Natural killer cell (primary cell): ENCODE measurements at regions of chr15 and their contacts with region 1.

Region 1: GRCh38 chr15:65773386-65774111 is 18.5 kb downstream of the DENND4A start:
- DNase-seq: no peak
- ATAC-seq: peak; percentile 13 to 35 (median 31)
- H3K4me3 ChIP-seq: no peak overlapping the region
- H3K4me3 Mint-ChIP-seq: peak overlapping the region; percentile 61
- H3K27ac ChIP-seq: peak overlapping the region; percentile 55
- H3K27ac Mint-ChIP-seq: peak overlapping the region; percentile 44 to 56
- H3K4me1 ChIP-seq: peaks cover 30% of the 10 kb centered on the region
- H3K4me1 Mint-ChIP-seq: peaks cover 45 to 55% of the 10 kb centered on the region in 2 donors
- H3K27me3 ChIP-seq: no peaks in the 10 kb centered on the region
- H3K27me3 Mint-ChIP-seq: no peaks in the 10 kb centered on the region
- CTCF ChIP-seq: no peak

Region 2: DNA sequence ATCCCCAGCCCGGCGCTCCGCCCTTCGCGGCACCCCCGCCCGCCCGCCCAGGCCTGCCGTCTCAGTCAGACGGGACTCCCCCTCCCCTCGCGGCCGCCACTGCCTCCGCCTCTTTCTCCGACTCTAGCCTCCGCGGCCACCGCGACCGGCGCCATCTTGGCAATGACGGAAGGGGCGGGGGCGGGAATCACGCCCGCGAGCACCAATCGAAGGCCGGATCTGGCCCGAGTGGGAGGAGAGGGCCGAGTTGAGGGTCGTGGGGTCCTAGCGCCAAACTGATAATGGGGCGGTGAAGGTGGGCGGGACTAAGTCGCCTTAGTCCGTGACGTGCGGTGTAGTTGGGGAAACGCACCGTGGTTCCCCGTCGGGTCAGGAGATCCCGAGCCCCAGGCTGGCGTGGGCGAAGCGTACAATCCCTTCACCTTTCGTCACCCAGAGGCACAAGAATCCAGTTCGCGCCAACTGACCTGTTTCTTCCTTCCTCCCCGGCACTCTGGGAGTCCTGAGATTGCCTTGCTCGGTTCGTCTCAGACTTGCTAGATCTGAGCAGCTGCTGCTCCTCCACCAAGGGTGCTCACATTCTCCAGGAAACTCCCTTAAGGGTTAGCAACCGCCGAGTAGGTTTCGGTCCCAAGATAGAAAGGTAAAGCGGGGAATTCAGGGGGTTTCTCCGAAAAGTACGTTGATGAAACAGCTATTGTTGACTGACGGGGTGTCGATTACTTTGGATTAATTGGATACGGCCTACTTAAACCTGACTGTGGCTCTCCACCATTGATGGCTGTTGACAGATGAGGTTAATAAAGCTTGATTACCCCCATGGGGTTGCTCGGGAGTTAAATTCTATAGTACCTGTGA is 18.8 kb after region 1 on chr15 and contains the start of gene DENND4A:
- intact Hi-C with region 1: no loop called
- DNase-seq: peak; percentile 98 to 99
- ATAC-seq: peak; percentile 80 to 95 (median 83)
- H3K4me3 ChIP-seq: peak within 1 kb of the TSS; percentile 97
- H3K4me3 Mint-ChIP-seq: peak within 1 kb of the TSS; percentile 96
- H3K27ac ChIP-seq: peak within 1 kb of the TSS; percentile 96
- H3K27ac Mint-ChIP-seq: peak within 1 kb of the TSS; percentile 98 to 100
- H3K4me1 ChIP-seq: peaks cover 16% of the 10 kb centered on the region
- H3K4me1 Mint-ChIP-seq: peaks cover 38 to 39% of the 10 kb centered on the region in 2 donors
- H3K27me3 ChIP-seq: no peaks in the 10 kb centered on the region
- H3K27me3 Mint-ChIP-seq: no peaks in the 10 kb centered on the region
- CTCF ChIP-seq: no peak
- total RNA-seq, gene DENND4A: 65.8 to 84.6 (median 66.1) TPM

Region 3: GRCh38 chr15:65832549-65833364 is 59.2 kb after region 1 on chr15:
- intact Hi-C with region 1: loop called (anchors 5 kb)
- DNase-seq: peak; percentile 41 to 78
- ATAC-seq: peak; percentile 71 to 76 (median 75)
- H3K4me3 ChIP-seq: no peak overlapping the region
- H3K4me3 Mint-ChIP-seq: peak overlapping the region; percentile 86
- H3K27ac ChIP-seq: peak overlapping the region; percentile 87
- H3K27ac Mint-ChIP-seq: peak overlapping the region; percentile 97 to 98
- H3K4me1 ChIP-seq: peaks cover 51% of the 10 kb centered on the region
- H3K4me1 Mint-ChIP-seq: peaks cover 44 to 52% of the 10 kb centered on the region in 2 donors
- H3K27me3 ChIP-seq: no peaks in the 10 kb centered on the region
- H3K27me3 Mint-ChIP-seq: no peaks in the 10 kb centered on the region
- CTCF ChIP-seq: no peak

Region 4: GRCh38 chr15:66004618-66005262 is 231.2 kb after region 1 on chr15:
- intact Hi-C with region 1: no loop called
- DNase-seq: peak in 1 of 2 donors; percentile 26
- ATAC-seq: no peak
- H3K4me3 ChIP-seq: no peak overlapping the region
- H3K4me3 Mint-ChIP-seq: no peak overlapping the region
- H3K27ac ChIP-seq: no peak overlapping the region
- H3K27ac Mint-ChIP-seq: no peak overlapping the region
- H3K4me1 ChIP-seq: no peaks in the 10 kb centered on the region
- H3K4me1 Mint-ChIP-seq: no peaks in the 10 kb centered on the region
- H3K27me3 ChIP-seq: no peaks in the 10 kb centered on the region
- H3K27me3 Mint-ChIP-seq: peaks cover 13 to 17% of the 10 kb centered on the region in 2 donors
- CTCF ChIP-seq: no peak